A673 (cell line): ENCODE measurements at regions of chr20 and their contacts with region 1.

Region 1: DNA sequence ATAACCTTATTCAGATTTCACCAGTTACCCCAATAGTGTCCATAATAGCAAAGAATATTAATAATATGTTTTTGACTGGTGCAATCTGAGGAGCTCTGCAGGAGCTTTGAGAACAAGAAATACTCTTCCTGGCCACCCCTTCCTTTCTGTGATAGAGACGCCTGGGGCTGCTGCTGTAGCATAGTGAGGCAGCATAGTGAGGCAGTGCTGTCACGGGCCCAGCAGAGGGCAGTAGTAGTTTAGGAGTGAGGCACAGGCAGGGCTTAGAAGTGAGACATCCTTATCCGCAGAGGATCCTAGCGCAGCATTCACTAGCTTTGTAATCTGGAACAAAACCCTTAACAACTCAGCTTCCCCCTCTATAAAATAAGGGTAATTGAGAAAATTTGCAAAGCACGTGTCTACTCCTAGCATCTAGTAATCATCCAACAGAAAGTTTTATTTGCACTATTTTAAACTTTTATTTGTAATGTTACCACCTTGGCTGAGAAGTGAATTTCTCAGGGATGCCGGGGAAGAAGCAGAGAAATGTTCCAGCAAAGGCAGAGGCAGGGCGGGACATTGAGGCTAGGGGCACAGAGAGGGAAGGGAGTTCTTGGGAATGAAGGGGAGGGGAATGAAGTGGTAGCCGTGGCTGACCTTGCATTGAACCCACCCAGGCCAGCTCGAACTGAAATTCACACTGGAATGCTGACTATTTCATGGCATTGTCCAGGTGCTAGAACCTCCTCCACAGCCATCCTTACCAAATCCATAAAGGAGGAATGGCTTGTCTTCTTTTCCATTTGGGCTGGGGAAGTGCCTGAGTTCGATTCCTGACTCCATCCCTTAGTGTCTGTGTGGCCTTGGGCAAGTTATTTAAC is 78.8 kb downstream of the CDS2 start:
- DNase-seq: peak; percentile 82
- H3K4me3 ChIP-seq: no peak overlapping the region
- H3K27ac ChIP-seq: no peak overlapping the region
- H3K4me1 ChIP-seq: no peaks in the 10 kb centered on the region
- H3K27me3 ChIP-seq: no peaks in the 10 kb centered on the region
- CTCF ChIP-seq: peak; percentile 96

Region 2: GRCh38 chr20:5215672-5216304 is 10.2 kb after region 1 on chr20:
- CTCF ChIA-PET with region 1: interaction called, 10 read pairs
- POLR2A ChIA-PET with region 1: no interaction called
- intact Hi-C with region 1: no loop called
- DNase-seq: peak; percentile 88
- H3K4me3 ChIP-seq: no peak overlapping the region
- H3K27ac ChIP-seq: peak overlapping the region; percentile 51
- H3K4me1 ChIP-seq: peaks cover 20% of the 10 kb centered on the region
- H3K27me3 ChIP-seq: no peaks in the 10 kb centered on the region
- CTCF ChIP-seq: no peak

Region 3: DNA sequence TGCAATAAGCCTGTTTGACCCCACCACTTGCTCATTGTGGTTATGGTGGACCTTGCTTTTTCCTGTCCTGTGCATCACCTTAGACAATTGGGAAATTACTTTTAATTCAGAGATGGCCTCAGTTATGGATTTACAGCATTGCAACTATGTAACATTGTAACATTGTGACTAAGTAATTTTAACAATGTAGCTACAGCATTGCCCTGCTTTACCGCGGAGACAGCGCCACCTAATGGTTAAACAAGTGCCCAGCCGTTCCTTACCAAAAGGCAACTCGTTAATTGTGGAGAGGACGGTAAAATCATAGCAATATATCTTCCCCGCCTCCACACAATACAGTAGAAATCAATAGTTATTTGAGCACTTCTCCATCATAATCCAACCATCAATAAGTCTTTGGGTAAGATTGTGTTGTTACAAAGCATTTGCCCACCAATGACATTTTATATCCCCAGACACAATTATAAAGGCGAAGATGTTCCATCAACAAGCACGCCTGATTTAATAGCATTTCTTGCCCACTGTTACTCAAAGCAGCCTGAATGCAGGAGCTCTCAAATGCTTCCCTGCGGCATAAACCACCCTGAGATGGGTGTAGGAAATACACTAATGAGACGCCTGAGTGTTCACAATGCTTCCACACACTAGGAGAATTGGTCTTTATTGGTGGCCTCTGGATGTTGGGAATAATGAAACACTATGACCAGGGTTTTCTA is 17.5 kb after region 1 on chr20:
- CTCF ChIA-PET with region 1: interaction called, 15 read pairs
- POLR2A ChIA-PET with region 1: no interaction called
- intact Hi-C with region 1: loop called (anchors 2 kb)
- DNase-seq: peak; percentile 79
- H3K4me3 ChIP-seq: no peak overlapping the region
- H3K27ac ChIP-seq: no peak overlapping the region
- H3K4me1 ChIP-seq: no peaks in the 10 kb centered on the region
- H3K27me3 ChIP-seq: no peaks in the 10 kb centered on the region
- CTCF ChIP-seq: peak; percentile 99

Region 4: GRCh38 chr20:5448449-5449118 is 243.0 kb after region 1 on chr20:
- CTCF ChIA-PET with region 1: interaction called, 15 read pairs
- POLR2A ChIA-PET with region 1: no interaction called
- intact Hi-C with region 1: loop called (anchors 2 kb)
- DNase-seq: peak; percentile 60
- H3K4me3 ChIP-seq: no peak overlapping the region
- H3K27ac ChIP-seq: no peak overlapping the region
- H3K4me1 ChIP-seq: no peaks in the 10 kb centered on the region
- H3K27me3 ChIP-seq: peaks cover 42% of the 10 kb centered on the region
- CTCF ChIP-seq: peak; percentile 80